ENCODE measurements at regions of chr6 and their contacts with region 1.

Region 1: DNA sequence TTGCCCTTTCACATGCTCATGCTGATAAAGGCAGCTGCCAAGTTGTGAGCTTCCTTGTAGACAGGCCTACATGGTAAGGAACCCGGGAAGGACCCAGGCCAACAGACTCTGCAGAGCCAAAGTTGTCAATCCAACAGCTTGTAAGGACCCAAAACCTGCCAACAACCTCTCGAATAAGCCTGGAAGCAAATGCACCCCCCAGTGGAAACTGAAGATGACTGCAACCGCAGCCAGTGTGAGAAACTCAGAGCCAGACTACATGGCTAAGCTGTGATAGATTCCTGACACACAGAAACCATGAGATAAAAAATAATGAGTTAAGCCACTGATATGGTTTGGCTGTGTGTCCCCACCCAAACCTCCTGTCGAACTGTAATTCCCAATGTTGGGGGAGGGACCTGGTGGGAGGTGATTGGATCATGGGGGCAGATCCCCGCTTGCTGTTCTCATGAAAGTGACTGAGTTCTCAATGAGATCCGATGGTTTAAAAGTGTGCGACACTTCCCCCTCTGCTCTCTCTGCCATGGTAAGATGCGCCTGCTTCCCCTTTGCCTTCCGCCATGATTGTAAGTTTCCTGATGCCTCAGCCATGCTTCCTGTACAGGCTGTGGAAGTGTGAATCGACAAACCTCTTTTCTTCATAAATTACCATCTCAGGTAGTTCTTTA is 18.8 kb upstream of the CLPSL2 start:
- DNase-seq: peak; percentile 66
- H3K4me3 ChIP-seq: no peak overlapping the region
- H3K27ac ChIP-seq: no peak overlapping the region
- H3K4me1 ChIP-seq: peaks cover 25% of the 10 kb centered on the region
- CTCF ChIP-seq: peak; percentile 76

Region 2: GRCh38 chr6:35727935-35728682 is 29.5 kb before region 1 on chr6:
- CTCF ChIA-PET with region 1: no interaction called
- POLR2A ChIA-PET with region 1: no interaction called
- intact Hi-C with region 1: no loop called
- DNase-seq: peak; percentile 94
- H3K4me3 ChIP-seq: peak overlapping the region; percentile 75
- H3K27ac ChIP-seq: peak overlapping the region; percentile 96
- H3K4me1 ChIP-seq: peaks cover 80% of the 10 kb centered on the region
- CTCF ChIP-seq: no peak

Region 3: GRCh38 chr6:35955976-35956375 is 198.4 kb after region 1 on chr6:
- CTCF ChIA-PET with region 1: no interaction called
- POLR2A ChIA-PET with region 1: interaction called, 4 read pairs
- intact Hi-C with region 1: loop called (anchors 10 kb)
- DNase-seq: peak; percentile 10
- H3K4me3 ChIP-seq: no peak overlapping the region
- H3K27ac ChIP-seq: no peak overlapping the region
- H3K4me1 ChIP-seq: no peaks in the 10 kb centered on the region
- CTCF ChIP-seq: peak; percentile 77

Region 4: DNA sequence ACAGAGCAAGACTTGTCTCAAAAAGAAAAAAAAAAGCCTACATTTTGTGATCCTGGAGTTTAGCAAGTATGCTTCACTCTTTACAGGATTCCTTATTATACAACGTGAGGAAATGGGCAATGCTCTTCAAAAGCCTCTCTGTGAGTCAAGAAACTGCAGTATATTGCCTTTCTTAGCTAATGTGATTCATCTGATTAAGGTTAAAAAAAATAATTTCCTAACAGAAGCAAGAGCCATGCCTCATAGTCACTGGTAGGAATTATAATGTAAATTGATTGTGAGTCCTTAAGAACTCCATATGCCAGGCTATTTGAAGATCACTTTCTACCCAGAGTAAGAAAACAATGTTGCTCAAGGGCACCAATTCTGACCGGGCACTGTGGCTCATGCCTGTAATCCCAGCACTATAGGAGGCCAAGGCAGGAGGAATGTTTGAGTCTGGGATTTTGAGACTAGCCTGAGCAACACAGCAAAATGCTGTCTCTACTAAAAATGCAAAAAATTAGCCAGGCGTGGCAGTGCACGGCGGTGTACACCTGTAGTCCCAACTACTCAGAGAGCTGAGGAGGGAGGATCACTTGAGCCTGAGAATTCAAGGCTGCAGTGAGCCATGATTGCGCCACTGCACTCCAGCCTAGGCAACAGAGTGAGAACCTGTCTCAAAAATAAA is 223.5 kb after region 1 on chr6:
- CTCF ChIA-PET with region 1: no interaction called
- POLR2A ChIA-PET with region 1: no interaction called
- intact Hi-C with region 1: no loop called
- DNase-seq: no peak
- H3K4me3 ChIP-seq: no peak overlapping the region
- H3K27ac ChIP-seq: no peak overlapping the region
- H3K4me1 ChIP-seq: no peaks in the 10 kb centered on the region
- CTCF ChIP-seq: no peak

Measured in OCI-LY7 (cell line).